Endothelial cell of umbilical vein (primary cell): ENCODE measurements at regions of chr3 and their contacts with region 1.

Region 1: DNA sequence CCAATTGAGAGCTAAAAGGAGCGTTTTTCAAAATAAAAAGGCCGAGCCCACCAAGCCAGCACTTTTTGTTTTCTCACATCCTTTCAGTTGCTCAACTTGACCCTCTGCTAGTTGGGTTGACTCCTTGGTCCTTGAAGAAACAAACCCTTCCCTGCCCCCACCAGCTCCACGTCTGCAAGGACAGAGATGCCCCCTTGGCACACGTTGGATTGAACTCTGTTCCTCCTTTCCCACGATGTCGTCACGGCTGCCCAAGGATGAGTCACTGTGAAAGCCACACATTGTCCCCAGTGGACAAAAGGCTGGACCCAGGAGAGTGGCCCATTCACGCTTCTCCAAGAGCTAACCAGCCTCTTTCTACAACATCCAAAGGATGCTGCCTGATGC is 43.0 kb upstream of the SPATA12 start:
- DNase-seq: no peak
- H3K4me3 ChIP-seq: no peak overlapping the region
- H3K27ac ChIP-seq: no peak overlapping the region
- H3K4me1 ChIP-seq: no peaks in the 10 kb centered on the region
- H3K27me3 ChIP-seq: peaks cover 0 to 3% of the 10 kb centered on the region in 2 experiments
- CTCF ChIP-seq: no peak
- POLR2A ChIP-seq: no peak

Region 2: DNA sequence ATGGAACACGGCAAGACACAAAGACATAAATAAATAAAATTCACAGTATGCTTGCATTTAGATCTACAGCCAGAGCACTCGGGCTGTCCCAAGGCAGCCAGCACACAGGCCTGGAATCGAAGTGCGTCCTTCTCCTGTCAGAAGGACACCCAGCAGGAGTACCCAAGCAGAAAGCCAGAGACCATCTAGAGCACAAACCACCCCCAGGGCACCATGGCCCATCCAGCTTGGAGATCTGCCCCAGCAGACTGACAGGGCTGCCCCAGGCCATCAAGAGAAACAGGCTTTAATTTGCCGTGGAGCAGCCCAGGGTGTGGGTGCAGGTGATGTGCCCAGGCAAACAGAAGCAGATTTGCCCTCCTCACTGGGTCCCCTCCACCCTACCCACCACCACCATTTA is 35.2 kb after region 1 on chr3:
- CTCF ChIA-PET with region 1: no interaction called
- POLR2A ChIA-PET with region 1: no interaction called
- dilution Hi-C with region 1: no loop called
- intact Hi-C with region 1: loop called (anchors 1 kb)
- DNase-seq: no peak
- H3K4me3 ChIP-seq: no peak overlapping the region
- H3K27ac ChIP-seq: no peak overlapping the region
- H3K4me1 ChIP-seq: no peaks in the 10 kb centered on the region
- H3K27me3 ChIP-seq: peaks cover 0 to 7% of the 10 kb centered on the region in 2 experiments
- CTCF ChIP-seq: no peak
- POLR2A ChIP-seq: no peak